ENCODE measurements at regions of chr20 and their contacts with region 1.

Region 1: DNA sequence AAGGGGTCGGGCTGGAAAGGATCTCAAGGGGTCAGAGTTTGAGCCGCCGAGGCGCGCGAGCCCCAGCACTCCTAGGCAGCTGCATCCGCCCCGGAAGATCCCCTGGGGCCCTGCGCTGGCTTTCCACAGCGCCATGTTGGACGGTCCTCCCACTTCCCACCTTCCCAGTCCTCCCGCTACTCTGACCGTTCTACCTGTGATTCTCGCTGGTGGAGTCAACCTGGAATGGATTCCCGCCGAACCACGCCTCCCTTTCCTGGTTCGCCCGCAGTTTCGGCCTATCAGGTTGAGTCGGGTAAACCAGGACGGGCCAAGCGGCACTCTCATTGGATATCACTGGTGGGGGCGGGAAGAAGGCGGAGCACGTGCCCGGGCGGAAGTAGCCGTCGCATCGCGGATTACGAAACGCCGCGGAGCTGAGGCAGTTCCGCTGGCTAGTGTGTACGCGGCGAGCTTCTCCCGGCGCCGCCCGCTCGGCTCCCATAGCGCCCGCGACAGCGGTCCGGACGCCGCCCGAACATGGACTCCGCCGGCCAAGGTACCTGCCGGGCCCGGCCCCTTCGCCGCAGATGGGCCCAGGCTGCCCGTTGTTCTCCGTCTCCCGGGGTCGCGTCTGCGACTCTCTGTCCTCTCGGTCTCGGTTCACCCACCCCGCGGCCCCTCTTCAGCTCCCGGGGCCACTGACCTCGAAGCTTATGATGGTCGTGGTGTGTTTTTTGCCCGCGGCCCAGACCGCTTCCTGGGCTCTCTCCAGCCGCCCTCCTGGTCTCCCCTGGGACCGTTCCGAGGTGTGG is at the start of gene TPD52L2:
- DNase-seq: peak; percentile 99
- H3K4me3 ChIP-seq: peak within 1 kb of the TSS; percentile 77
- H3K27ac ChIP-seq: peak within 1 kb of the TSS; percentile 88
- H3K4me1 ChIP-seq: peaks cover 28% of the 10 kb centered on the region
- H3K27me3 ChIP-seq: no peaks in the 10 kb centered on the region
- CTCF ChIP-seq: no peak
- total RNA-seq, gene TPD52L2: 149 and 158 TPM in 2 replicates

Region 2: GRCh38 chr20:63529861-63530788 is 334.9 kb before region 1 on chr20:
- CTCF ChIA-PET with region 1: no interaction called
- POLR2A ChIA-PET with region 1: interaction called, 19 read pairs
- intact Hi-C with region 1: no loop called
- DNase-seq: no peak
- H3K4me3 ChIP-seq: no peak overlapping the region
- H3K27ac ChIP-seq: no peak overlapping the region
- H3K4me1 ChIP-seq: peaks cover 18% of the 10 kb centered on the region
- H3K27me3 ChIP-seq: no peaks in the 10 kb centered on the region
- CTCF ChIP-seq: no peak

Region 3: GRCh38 chr20:63627129-63627750 is 237.8 kb before region 1 on chr20:
- CTCF ChIA-PET with region 1: no interaction called
- POLR2A ChIA-PET with region 1: no interaction called
- intact Hi-C with region 1: loop called (anchors 1 kb)
- DNase-seq: peak; percentile 81 to 97
- H3K4me3 ChIP-seq: peak overlapping the region; percentile 92
- H3K27ac ChIP-seq: no peak overlapping the region
- H3K4me1 ChIP-seq: peaks cover 20% of the 10 kb centered on the region
- H3K27me3 ChIP-seq: no peaks in the 10 kb centered on the region
- CTCF ChIP-seq: no peak

Region 4: GRCh38 chr20:63707549-63708300 is 157.3 kb before region 1 on chr20 and contains the starts of genes ARFRP1 and ZGPAT:
- CTCF ChIA-PET with region 1: interaction called, 3 read pairs
- POLR2A ChIA-PET with region 1: interaction called, 9 read pairs
- intact Hi-C with region 1: loop called (anchors 1 kb)
- DNase-seq: peak; percentile 67 to 91
- H3K4me3 ChIP-seq: peak within 1 kb of the TSS; percentile 96
- H3K27ac ChIP-seq: peak within 1 kb of the TSS; percentile 37
- H3K4me1 ChIP-seq: peaks cover 18% of the 10 kb centered on the region
- H3K27me3 ChIP-seq: no peaks in the 10 kb centered on the region
- CTCF ChIP-seq: no peak
- total RNA-seq, gene ARFRP1: 59.1 and 71.1 TPM in 2 replicates
- total RNA-seq, gene ZGPAT: 27.2 and 31.4 TPM in 2 replicates

Region 5: GRCh38 chr20:63785691-63786131 is 79.3 kb before region 1 on chr20:
- CTCF ChIA-PET with region 1: interaction called, 3 read pairs
- POLR2A ChIA-PET with region 1: no interaction called
- intact Hi-C with region 1: loop called (anchors 1 kb)
- DNase-seq: no peak
- H3K4me3 ChIP-seq: no peak overlapping the region
- H3K27ac ChIP-seq: no peak overlapping the region
- H3K4me1 ChIP-seq: no peaks in the 10 kb centered on the region
- H3K27me3 ChIP-seq: no peaks in the 10 kb centered on the region
- CTCF ChIP-seq: no peak

Region 6: DNA sequence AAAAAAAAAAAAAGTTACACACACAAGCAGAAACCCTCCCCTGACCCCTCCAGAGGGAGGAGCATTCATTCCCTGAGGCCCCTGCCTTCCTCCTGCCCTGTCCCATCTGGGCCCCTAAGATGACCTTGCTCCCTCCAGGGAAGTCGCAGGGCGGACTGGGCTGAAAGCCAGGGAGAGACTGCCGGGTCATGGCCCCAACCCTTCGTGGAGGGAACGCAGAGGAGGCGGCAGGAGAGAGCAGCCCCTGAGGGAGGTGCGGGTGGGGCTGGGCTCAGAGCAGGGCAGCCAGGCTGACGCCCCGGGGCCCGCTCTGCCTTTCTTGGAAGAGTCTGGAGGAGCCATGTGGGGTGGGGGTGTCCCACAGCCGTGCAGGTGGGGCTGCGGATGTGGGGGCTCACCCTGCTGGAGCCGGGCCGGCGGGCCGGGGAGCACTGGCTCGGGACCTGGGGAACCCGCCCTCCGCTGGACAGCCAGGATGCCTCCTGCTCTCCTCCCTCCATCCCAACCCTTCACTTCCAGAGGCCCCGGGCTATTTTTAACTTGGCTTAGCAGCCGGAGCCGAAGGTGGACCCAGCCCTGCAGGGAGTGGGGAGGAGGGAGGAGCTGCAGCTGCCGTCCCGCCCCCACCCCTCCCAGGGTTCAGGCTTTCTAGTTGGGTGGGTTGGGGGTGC is 18.8 kb before region 1 on chr20:
- CTCF ChIA-PET with region 1: no interaction called
- POLR2A ChIA-PET with region 1: no interaction called
- intact Hi-C with region 1: no loop called
- DNase-seq: peak in 1 of 2 experiments; percentile 74
- H3K4me3 ChIP-seq: no peak overlapping the region
- H3K27ac ChIP-seq: no peak overlapping the region
- H3K4me1 ChIP-seq: peaks cover 31% of the 10 kb centered on the region
- H3K27me3 ChIP-seq: peaks cover 5% of the 10 kb centered on the region; the same call in 1 of the 2 replicates
- CTCF ChIP-seq: no peak

Region 7: DNA sequence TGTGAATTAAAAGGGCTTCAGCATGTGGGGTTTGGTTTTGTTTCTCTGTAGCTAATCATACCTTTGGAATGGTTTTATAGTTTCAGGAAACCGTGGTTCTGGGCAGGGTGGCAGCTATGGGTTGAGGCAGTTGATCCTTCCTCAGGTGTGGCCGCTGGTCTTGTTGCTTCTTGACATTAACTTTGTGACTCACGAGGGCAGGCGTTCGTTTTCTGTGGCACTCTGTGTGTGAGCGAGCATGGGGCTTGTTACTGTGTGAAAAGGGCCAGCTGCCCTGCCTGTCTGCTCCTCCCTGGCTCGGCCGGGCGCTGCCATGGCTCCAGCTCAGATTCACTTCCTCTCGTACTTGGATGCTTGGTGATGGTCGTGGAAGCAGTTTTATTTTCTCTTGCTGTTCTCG is 46.1 kb after region 1 on chr20:
- CTCF ChIA-PET with region 1: no interaction called
- POLR2A ChIA-PET with region 1: no interaction called
- intact Hi-C with region 1: no loop called
- DNase-seq: peak in 1 of 2 experiments; percentile 64
- H3K4me3 ChIP-seq: no peak overlapping the region
- H3K27ac ChIP-seq: peak overlapping the region; percentile 12; the same call in 1 of the 2 replicates
- H3K4me1 ChIP-seq: no peaks in the 10 kb centered on the region
- H3K27me3 ChIP-seq: no peaks in the 10 kb centered on the region
- CTCF ChIP-seq: no peak

Region 8: DNA sequence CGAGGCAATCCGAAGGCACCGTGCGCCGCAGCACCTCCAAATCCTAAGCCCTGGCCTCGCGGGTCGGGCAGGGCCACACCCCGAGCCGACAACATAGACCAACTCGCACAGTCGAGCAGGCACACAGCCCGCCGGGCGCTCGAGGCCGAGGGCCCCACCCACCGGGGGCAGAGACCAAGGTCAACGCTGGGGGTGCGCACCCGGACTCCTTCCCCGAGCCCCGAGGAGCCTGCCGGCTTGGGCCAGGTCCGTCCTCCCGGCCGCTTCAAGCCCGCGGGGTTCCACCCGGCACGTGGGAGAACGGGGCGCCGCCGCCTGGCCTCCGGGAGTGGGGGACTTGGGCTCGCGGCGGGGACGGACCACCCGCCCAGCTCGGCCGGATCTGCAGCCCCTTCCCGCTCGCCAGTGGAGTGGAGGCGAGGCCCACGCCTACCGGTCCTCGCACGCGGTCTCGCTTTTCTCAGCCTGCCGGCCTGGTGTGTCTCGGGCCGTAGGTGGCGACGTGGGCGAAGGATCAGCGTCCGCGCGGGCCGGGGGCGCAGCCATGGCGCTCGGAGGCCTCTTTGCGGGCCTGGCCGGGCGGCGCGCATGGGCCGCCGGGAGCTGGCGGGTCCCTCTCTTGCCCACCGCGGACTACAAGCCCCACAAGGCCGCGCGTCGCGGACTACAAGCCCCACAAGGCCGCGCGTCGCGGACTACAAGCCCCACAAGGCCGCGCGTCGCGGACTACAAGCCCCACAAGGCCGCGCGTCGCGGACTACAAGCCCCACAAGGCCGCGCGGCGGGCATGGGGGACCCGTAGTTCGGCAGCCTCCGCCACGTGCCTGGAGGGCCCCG is 91.0 kb after region 1 on chr20 and contains the start of gene UCKL1:
- CTCF ChIA-PET with region 1: interaction called, 9 read pairs
- POLR2A ChIA-PET with region 1: interaction called, 3 read pairs
- intact Hi-C with region 1: loop called (anchors 1 kb)
- DNase-seq: peak; percentile 74 to 94
- H3K4me3 ChIP-seq: peak within 1 kb of the TSS; percentile 74
- H3K27ac ChIP-seq: peak within 1 kb of the TSS; percentile 65
- H3K4me1 ChIP-seq: peaks cover 26% of the 10 kb centered on the region; the same call in 1 of the 2 replicates
- H3K27me3 ChIP-seq: no peaks in the 10 kb centered on the region
- CTCF ChIP-seq: 0 out of 2 replicates have a peak, but pooled peaks have one; percentile 13
- total RNA-seq, gene UCKL1: 51.7 and 55.1 TPM in 2 replicates